Psoas muscle (tissue), 8 donors: ENCODE measurements at regions of chr17 and their contacts with region 1.

Region 1: DNA sequence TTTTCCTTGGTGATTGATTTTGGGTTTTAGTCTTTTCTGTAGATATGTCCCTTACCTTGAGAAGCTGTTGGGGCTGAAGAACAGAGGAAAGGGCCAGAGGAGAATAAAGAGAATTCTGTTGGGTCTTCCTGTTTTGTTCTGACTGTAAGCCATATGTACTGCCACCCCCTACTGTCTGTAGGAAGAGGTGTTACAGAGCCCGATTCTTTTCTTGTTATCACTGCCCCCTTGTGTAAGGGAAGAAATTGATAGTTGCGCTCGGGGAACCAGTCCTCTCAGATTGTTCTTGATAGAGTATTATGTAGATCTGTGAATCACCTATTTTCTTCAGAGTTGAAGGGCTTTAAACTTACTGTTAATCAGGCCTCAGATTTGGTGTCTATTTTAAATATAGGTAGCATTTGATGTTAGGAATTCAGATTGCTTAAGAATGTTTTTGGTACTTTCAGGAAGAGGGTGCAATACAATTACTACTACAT is 2.4 kb downstream of the TANC2 start:
- DNase-seq: no peak
- ATAC-seq: peak; percentile 49 to 69 (median 56)
- H3K4me3 ChIP-seq: peak overlapping the region; percentile 85
- H3K27ac ChIP-seq: no peak overlapping the region
- H3K4me1 ChIP-seq: peaks cover 11% of the 10 kb centered on the region
- H3K27me3 ChIP-seq: no peaks in the 10 kb centered on the region
- CTCF ChIP-seq: peak; percentile 70

Region 2: DNA sequence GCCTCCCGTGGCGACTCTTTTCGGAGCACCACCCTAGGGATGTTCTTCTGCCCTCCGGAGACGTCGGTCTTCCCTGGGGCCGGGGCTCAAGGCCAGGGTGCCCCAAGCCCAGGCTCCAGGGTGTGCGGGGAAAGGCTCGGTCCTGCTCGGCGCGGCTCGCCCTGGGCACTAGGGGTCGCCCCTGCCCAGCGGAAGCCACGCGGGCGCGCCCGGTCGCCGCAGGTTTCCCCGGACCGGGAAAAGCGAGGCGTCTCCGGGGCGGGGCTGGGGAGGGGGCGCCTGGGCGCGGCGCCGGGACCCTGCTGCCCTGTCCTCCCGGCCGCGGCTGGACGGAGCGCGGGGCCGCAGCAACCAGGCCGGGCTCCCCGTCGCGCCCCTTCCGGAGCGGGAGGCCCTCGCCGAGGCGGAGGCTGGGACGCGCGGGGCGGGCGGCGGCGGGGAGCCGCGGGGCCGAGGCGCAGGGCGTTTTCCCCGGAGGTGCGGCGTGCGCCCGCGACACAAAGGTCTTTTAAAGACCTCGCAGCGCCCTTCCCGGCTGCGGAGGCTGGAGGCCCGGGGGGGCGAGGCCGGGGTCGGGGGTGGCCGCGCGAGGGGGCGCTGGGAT is 264.6 kb before region 1 on chr17:
- intact Hi-C with region 1: loop called (anchors 1 to 5 kb)
- DNase-seq: peak; percentile 71 to 84
- ATAC-seq: peak; percentile 90 to 97 (median 94)
- H3K4me3 ChIP-seq: peak overlapping the region; percentile 71
- H3K27ac ChIP-seq: peak overlapping the region; percentile 36
- H3K4me1 ChIP-seq: peaks cover 5% of the 10 kb centered on the region
- H3K27me3 ChIP-seq: peaks cover 0 to 21% (median 0%) of the 10 kb centered on the region in 3 donors
- CTCF ChIP-seq: peak; percentile 81

Region 3: DNA sequence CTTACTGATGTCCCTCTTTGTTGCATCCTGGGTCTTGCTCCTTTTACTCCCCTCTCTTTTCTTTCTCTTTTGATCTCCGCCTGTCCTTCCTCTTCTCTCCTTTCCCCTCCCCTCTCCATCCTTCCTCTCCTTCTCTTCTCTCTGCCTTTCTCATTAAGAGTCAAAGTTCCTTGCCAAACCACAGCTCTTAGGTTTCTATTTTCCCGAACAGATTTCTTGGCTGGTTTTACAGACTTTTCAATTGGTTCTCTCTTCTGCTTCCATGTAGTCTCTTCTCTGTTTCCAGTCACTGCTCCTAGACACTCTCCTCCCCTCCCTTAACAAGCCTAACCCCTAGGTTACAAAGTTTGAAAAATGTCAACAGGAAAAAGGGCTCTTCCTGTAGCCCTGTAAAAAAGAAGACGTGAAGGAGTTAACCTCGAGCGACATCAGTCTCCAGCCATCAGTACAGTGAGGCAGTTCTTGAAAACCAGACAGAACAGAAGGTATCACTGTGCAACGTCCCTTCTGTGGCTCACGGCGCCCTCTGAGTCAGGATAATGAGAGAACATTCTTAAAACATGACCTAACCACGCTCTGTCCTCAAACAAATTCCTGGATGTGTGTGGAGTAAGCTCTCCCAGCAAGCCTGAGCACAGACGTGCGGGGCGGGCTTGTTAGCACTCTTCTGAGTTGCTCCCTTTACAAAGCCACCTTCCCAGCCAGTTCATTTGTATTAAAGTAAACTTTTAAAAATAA is 148.8 kb before region 1 on chr17:
- intact Hi-C with region 1: loop called in 1 of 2 experiments (anchors 5 kb)
- DNase-seq: peak; percentile 62 to 63
- ATAC-seq: peak; percentile 77 to 96 (median 84)
- H3K4me3 ChIP-seq: no peak overlapping the region
- H3K27ac ChIP-seq: no peak overlapping the region
- H3K4me1 ChIP-seq: no peaks in the 10 kb centered on the region
- H3K27me3 ChIP-seq: no peaks in the 10 kb centered on the region
- CTCF ChIP-seq: no peak

Region 4: GRCh38 chr17:62892870-62893338 is 75.6 kb before region 1 on chr17:
- intact Hi-C with region 1: no loop called
- DNase-seq: no peak
- ATAC-seq: peak in 1 of 4 donors; percentile 21
- H3K4me3 ChIP-seq: no peak overlapping the region
- H3K27ac ChIP-seq: no peak overlapping the region
- H3K4me1 ChIP-seq: peaks cover 14% of the 10 kb centered on the region
- H3K27me3 ChIP-seq: peaks cover 0 to 3% (median 0%) of the 10 kb centered on the region in 3 donors
- CTCF ChIP-seq: no peak

Region 5: DNA sequence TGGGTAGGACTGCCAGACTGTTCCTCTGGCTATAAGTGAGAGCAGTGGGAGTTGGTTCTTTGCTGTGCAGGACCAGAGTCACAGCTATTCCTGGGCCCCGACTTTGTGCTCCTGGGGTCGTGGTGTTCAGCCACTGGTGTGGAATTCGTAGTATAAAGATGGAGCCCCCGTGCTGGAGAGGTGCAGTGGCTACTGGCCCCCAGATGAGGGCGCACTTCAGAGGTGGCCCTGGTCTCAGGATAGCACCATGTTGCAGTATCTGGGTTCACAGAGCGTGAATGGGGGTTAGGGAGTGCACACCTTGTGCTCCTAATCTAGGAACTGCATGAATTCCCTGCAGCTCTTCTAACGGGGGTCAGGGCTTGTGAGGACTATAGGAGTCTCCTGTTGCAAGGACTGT is 18.7 kb after region 1 on chr17:
- intact Hi-C with region 1: no loop called
- DNase-seq: no peak
- ATAC-seq: no peak
- H3K4me3 ChIP-seq: no peak overlapping the region
- H3K27ac ChIP-seq: no peak overlapping the region
- H3K4me1 ChIP-seq: no peaks in the 10 kb centered on the region
- H3K27me3 ChIP-seq: no peaks in the 10 kb centered on the region
- CTCF ChIP-seq: no peak

Region 6: GRCh38 chr17:62998665-62999393 is 30.3 kb after region 1 on chr17:
- intact Hi-C with region 1: no loop called
- DNase-seq: no peak
- ATAC-seq: no peak
- H3K4me3 ChIP-seq: no peak overlapping the region
- H3K27ac ChIP-seq: no peak overlapping the region
- H3K4me1 ChIP-seq: peaks cover 2% of the 10 kb centered on the region
- H3K27me3 ChIP-seq: no peaks in the 10 kb centered on the region
- CTCF ChIP-seq: no peak